GM10248 (cell line): ENCODE measurements at regions of chr13 and their contacts with region 1.

Region 1: GRCh38 chr13:113029487-113030258 is 60.7 kb downstream of the MCF2L start:
- DNase-seq: peak; percentile 63
- CTCF ChIP-seq: peak; percentile 77

Region 2: DNA sequence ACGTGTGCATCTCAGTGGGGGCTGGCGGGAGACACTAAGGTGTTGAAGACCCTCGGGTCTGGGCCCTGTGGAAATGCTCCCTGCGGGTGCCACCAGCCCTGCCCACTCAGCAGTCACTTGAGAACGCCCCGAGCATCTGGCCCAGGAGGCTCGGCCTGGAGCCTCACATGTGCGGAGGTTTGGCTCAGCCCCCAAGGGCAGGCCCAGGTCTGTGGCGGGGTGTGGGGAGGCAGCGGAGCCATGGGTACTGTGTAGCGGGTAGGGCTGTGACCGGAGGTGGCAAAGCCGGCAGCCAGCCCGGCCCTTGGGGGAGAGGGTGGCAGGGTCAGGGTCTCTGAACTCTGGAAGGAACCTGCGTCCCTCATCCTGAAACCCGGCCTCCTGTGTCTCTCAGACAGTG is 23.0 kb before region 1 on chr13:
- CTCF ChIA-PET with region 1: no interaction called
- POLR2A ChIA-PET with region 1: no interaction called
- DNase-seq: no peak
- CTCF ChIP-seq: no peak

Region 3: GRCh38 chr13:113016526-113017295 is 13.0 kb before region 1 on chr13:
- CTCF ChIA-PET with region 1: interaction called, 10 read pairs
- POLR2A ChIA-PET with region 1: no interaction called
- DNase-seq: no peak
- CTCF ChIP-seq: no peak

Region 4: GRCh38 chr13:113153810-113154748 is 124.4 kb after region 1 on chr13:
- CTCF ChIA-PET with region 1: no interaction called
- POLR2A ChIA-PET with region 1: no interaction called
- DNase-seq: peak; percentile 77
- CTCF ChIP-seq: no peak

Region 5: GRCh38 chr13:113297370-113298042 is 267.8 kb after region 1 on chr13:
- CTCF ChIA-PET with region 1: no interaction called
- POLR2A ChIA-PET with region 1: no interaction called
- DNase-seq: peak; percentile 53
- CTCF ChIP-seq: no peak